Psoas muscle (tissue), 8 donors: ENCODE measurements at regions of chr15 and their contacts with region 1.

Region 1: DNA sequence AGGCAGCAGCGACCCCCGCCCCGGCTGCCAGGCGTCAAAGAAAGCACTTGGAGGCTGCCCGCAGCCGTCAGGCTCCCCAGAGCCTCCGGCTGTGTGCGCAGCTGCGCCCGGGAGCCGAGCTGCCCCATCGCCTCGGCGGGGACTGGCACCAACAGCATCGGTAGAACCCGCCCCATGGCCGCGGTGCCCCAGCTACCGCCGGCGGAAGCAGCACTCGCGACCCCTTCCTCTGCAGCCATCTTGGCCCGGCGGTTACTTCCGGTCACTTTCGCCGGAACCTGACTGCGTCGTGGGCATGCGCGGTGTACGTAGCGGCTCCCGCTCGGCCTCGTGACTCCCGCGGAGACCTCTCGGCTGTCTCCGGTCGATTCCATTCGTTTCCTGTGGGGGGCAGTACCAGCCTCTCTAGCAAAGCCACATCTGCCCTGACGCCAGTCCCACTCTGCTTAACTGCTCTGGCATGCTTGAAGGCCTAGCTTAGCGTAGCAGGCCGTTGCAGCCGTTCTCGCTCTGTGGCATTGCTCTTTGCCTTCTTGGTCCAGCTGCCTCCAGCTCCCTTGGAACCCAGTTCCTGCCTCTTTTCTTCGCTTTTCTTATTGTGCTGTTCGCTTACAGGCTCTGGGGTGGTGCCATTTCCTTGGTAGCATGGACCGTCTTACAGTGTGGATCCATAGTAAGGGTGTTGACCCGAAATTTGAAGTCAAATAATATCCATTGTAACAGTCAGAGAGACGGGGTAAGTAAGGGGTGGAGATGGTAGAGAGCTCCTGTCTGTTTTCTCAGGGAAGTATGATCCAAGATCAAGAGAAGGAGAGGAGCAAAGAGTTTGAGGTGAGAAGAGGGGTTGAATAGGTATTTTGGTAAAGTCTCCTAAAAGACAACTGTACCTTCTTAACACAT is at the start of gene SPG11:
- DNase-seq: peak; percentile 97 to 99
- ATAC-seq: peak; percentile 98 to 99 (median 98)
- H3K4me3 ChIP-seq: peak within 1 kb of the TSS; percentile 82
- H3K27ac ChIP-seq: peak within 1 kb of the TSS; percentile 98
- H3K4me1 ChIP-seq: peaks cover 20% of the 10 kb centered on the region
- H3K27me3 ChIP-seq: peaks cover 0 to under 1% (median 0%) of the 10 kb centered on the region in 3 donors
- CTCF ChIP-seq: peak; percentile 95
- total RNA-seq, gene SPG11: 26.3 to 38.1 (median 36.0) TPM

Region 2: DNA sequence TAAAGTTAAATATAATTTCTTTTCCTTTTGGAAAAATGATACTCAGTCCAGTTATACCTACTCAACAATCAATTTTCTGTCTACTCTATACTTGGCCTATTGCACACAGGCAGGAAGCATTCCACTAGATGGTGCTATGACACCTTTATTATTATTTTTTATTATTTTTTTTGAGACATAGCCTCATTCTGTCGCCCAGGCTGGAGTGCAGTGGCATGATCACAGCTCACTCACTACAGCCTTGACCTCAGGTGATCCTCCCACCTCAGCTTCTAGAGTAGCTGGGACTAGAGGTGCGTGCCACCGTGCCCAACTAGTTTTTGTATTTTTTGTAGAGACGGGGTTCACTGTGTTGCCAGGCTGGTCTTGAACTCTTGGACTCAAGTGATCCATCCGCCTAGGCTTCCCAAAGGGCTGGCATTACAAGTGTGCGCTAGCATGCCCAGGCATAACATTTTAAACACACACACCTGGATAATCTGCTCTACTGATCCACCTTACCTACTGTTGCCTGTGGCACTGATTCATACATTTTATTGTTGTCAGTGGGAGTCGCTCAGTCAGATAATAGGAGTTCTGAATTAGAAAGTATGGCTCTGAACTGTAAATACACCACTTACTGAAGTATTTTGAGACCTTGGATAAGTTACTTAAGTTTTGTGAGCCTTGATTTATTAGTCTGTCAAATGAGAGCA is 70.5 kb before region 1 on chr15:
- intact Hi-C with region 1: no loop called
- DNase-seq: no peak
- ATAC-seq: peak in 3 of 4 donors; percentile 37 to 51 (median 40)
- H3K4me3 ChIP-seq: no peak overlapping the region
- H3K27ac ChIP-seq: no peak overlapping the region
- H3K4me1 ChIP-seq: no peaks in the 10 kb centered on the region
- H3K27me3 ChIP-seq: no peaks in the 10 kb centered on the region
- CTCF ChIP-seq: peak; percentile 24

Region 3: GRCh38 chr15:44711356-44712107 is 47.9 kb after region 1 on chr15 and contains the start of gene B2M:
- intact Hi-C with region 1: loop called (anchors 1 to 5 kb)
- DNase-seq: peak; percentile 94 to 98
- ATAC-seq: peak; percentile 97 to 98 (median 98)
- H3K4me3 ChIP-seq: peak within 1 kb of the TSS; percentile 82
- H3K27ac ChIP-seq: peak within 1 kb of the TSS; percentile 95
- H3K4me1 ChIP-seq: peaks cover 4% of the 10 kb centered on the region
- H3K27me3 ChIP-seq: no peaks in the 10 kb centered on the region
- CTCF ChIP-seq: no peak
- total RNA-seq, gene B2M: 400 to 577 (median 512) TPM

Region 4: GRCh38 chr15:44738340-44738984 is 74.8 kb after region 1 on chr15:
- intact Hi-C with region 1: loop called (anchors 2 kb)
- DNase-seq: no peak
- ATAC-seq: peak in 3 of 4 donors; percentile 50 to 64 (median 51)
- H3K4me3 ChIP-seq: no peak overlapping the region
- H3K27ac ChIP-seq: no peak overlapping the region
- H3K4me1 ChIP-seq: no peaks in the 10 kb centered on the region
- H3K27me3 ChIP-seq: no peaks in the 10 kb centered on the region
- CTCF ChIP-seq: peak; percentile 76

Region 5: DNA sequence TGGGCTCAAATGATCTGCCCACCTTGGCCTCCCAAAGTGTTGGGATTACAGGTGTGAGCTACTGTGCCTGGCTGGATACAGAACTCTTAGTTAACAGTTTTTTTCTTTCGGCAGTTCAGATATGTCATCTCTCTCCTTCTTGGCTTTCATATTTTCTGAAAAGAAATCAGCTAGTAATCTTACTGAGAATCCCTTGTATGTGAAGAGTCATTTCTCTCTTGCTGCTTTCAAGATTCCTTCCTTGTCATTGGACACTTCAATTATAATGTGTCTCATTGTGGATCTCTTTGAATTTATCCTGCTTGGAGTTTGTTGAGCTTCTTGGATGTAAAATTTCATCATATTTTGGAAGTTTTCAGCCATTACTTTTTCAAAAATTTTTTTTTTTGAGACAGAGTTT is 89.7 kb after region 1 on chr15:
- intact Hi-C with region 1: no loop called
- DNase-seq: no peak
- ATAC-seq: no peak
- H3K4me3 ChIP-seq: no peak overlapping the region
- H3K27ac ChIP-seq: no peak overlapping the region
- H3K4me1 ChIP-seq: no peaks in the 10 kb centered on the region
- H3K27me3 ChIP-seq: no peaks in the 10 kb centered on the region
- CTCF ChIP-seq: no peak

Region 6: GRCh38 chr15:44788748-44789147 is 125.1 kb after region 1 on chr15:
- intact Hi-C with region 1: loop called (anchors 1 to 5 kb)
- DNase-seq: no peak
- ATAC-seq: no peak
- H3K4me3 ChIP-seq: no peak overlapping the region
- H3K27ac ChIP-seq: no peak overlapping the region
- H3K4me1 ChIP-seq: no peaks in the 10 kb centered on the region
- H3K27me3 ChIP-seq: no peaks in the 10 kb centered on the region
- CTCF ChIP-seq: no peak